Right ventricle myocardium inferior (tissue), 1 donor: ENCODE measurements at regions of chr17 and their contacts with region 1.

Region 1: DNA sequence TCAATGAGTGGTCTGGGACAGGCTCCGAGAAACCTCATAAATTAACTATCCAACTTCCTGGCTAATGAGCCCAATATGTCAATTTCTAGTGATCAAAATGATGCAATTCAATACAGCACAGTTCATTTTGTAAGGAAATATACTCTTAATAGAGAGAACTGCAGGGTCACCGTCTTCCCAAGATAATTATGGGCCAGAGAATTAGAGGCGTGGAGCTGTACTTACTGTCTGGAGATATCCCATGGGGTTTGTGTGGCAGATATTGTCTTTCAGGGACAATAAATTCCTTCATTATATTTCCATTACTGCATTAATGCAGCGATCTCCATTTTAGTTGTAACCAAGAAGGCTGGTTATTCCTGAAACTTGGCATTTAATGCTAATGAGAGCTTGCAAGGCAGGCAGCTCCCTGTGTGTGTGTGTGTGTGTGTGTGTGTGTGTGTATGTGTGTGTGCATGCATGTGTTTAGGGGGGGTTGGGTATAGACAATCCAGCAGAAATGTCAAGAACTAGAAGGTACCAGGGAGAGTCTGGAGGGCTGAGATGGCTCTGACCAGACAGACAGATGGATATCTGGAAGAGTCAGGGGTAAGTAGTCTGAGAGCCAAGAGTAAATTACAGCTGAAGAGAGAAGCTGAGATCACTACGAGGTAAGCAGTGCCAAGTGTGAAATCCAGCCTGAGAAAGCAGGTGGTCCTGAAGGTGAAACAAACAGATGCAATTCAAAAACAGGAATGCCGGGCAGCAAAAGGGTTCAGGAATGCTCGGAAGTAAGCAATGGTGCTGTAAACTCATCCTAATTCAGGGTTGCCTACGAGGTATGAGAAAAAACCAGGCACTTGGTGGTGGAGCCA is 393.0 kb downstream of the CA10 start:
- DNase-seq: no peak
- ATAC-seq: no peak

Region 2: GRCh38 chr17:51709694-51710633 is 55.5 kb before region 1 on chr17:
- intact Hi-C with region 1: no loop called
- DNase-seq: no peak
- ATAC-seq: peak; percentile 26

Region 3: GRCh38 chr17:52106638-52107261 is 341.2 kb after region 1 on chr17:
- intact Hi-C with region 1: loop called (anchors 5 kb)
- DNase-seq: no peak
- ATAC-seq: no peak